PC-3 (cell line): ENCODE measurements at regions of chr9 and their contacts with region 1.

Region 1: GRCh38 chr9:21812946-21813568 is 10.6 kb downstream of the MTAP start:
- DNase-seq: peak; percentile 72
- ATAC-seq: peak; percentile 68
- H3K4me3 ChIP-seq: no peak overlapping the region
- H3K27ac ChIP-seq: peak overlapping the region; percentile 57
- H3K4me1 ChIP-seq: peaks cover 28% of the 10 kb centered on the region
- H3K27me3 ChIP-seq: no peaks in the 10 kb centered on the region
- CTCF ChIP-seq: peak; percentile 90

Region 2: GRCh38 chr9:21965401-21965951 is 152.4 kb after region 1 on chr9:
- CTCF ChIA-PET with region 1: no interaction called
- POLR2A ChIA-PET with region 1: interaction called, 3 read pairs
- intact Hi-C with region 1: loop called (anchors 2 kb)
- DNase-seq: peak; percentile 60
- ATAC-seq: peak; percentile 83
- H3K4me3 ChIP-seq: peak overlapping the region; percentile 64
- H3K27ac ChIP-seq: peak overlapping the region; percentile 68
- H3K4me1 ChIP-seq: no peaks in the 10 kb centered on the region; the same call in 1 of the 2 replicates
- H3K27me3 ChIP-seq: no peaks in the 10 kb centered on the region
- CTCF ChIP-seq: peak; percentile 50

Region 3: DNA sequence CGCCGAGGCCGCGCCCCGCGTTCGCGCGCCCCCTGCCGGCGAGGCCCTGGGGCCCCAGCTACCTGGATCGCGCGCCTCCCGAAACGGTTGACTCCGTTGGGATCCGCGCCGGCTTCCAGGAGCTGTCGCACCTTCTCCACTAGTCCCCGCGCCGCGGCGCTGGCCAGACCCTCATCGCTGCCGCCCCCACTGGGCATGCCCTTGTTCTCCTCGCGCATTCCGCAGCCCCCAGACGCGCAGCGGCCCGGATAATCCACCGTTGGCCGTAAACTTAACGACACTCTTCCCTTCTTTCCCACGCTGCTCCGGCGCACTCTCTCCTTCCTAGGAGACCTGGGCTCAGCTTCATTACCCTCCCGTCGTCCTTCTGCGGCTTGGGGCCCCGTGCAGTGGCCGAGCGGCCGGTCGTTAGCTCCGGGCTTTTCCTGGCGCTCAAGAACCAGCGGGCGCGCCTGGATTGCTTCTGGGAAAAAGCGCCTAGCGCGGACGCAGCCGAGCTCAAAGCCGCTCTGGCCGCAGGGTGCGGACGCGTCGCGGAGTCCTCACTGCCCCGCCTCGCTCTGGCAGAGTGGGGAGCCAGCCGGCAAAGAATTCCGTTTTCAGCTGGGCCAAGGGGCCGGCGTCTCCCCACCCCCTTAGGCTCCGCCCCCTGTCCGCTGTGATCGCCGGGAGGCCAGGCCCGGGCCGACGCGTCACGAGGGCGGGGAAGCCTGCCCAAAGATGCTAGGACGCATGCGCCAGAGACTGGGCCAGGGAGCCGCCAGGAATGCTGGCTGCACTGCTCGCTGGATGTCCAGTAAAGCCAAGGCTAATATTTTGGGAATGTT is 195.9 kb after region 1 on chr9 and contains the start of gene CDKN2B:
- CTCF ChIA-PET with region 1: interaction called, 3 read pairs
- POLR2A ChIA-PET with region 1: no interaction called
- intact Hi-C with region 1: loop called (anchors 1 kb)
- DNase-seq: peak; percentile 95
- ATAC-seq: peak; percentile 89
- H3K4me3 ChIP-seq: peak within 1 kb of the TSS; percentile 87
- H3K27ac ChIP-seq: peak within 1 kb of the TSS; percentile 90
- H3K4me1 ChIP-seq: peaks cover 9% of the 10 kb centered on the region
- H3K27me3 ChIP-seq: no peaks in the 10 kb centered on the region
- CTCF ChIP-seq: peak; percentile 83
- total RNA-seq, gene CDKN2B: 32.2 and 32.7 TPM in 2 replicates

Region 4: GRCh38 chr9:22244141-22245011 is 431.3 kb after region 1 on chr9:
- CTCF ChIA-PET with region 1: interaction called, 4 read pairs
- POLR2A ChIA-PET with region 1: interaction called, 4 read pairs
- intact Hi-C with region 1: loop called (anchors 1 kb)
- DNase-seq: peak; percentile 73
- ATAC-seq: peak; percentile 82
- H3K4me3 ChIP-seq: no peak overlapping the region; the same call in 1 of the 2 replicates
- H3K27ac ChIP-seq: peak overlapping the region; percentile 21
- H3K4me1 ChIP-seq: peaks cover 24% of the 10 kb centered on the region
- H3K27me3 ChIP-seq: no peaks in the 10 kb centered on the region
- CTCF ChIP-seq: peak; percentile 71

Region 5: GRCh38 chr9:22469928-22470544 is 657.0 kb after region 1 on chr9:
- CTCF ChIA-PET with region 1: interaction called, 15 read pairs
- POLR2A ChIA-PET with region 1: no interaction called
- intact Hi-C with region 1: no loop called
- DNase-seq: peak; percentile 86
- ATAC-seq: peak; percentile 68; the same call in 1 of the 2 replicates
- H3K4me3 ChIP-seq: no peak overlapping the region
- H3K27ac ChIP-seq: no peak overlapping the region
- H3K4me1 ChIP-seq: no peaks in the 10 kb centered on the region
- H3K27me3 ChIP-seq: no peaks in the 10 kb centered on the region
- CTCF ChIP-seq: peak; percentile 76